Dorsolateral prefrontal cortex (tissue), 120 donors: ENCODE measurements at regions of chr14 and their contacts with region 1.

Region 1: GRCh38 chr14:56659964-56660551 is 80.5 kb downstream of the TMEM260 start:
- DNase-seq: no peak
- H3K4me3 ChIP-seq: no peak overlapping the region
- H3K27ac ChIP-seq: no peak overlapping the region
- H3K27me3 ChIP-seq: no peaks in the 10 kb centered on the region
- CTCF ChIP-seq: peak; percentile 24 to 76 (median 62)

Region 2: DNA sequence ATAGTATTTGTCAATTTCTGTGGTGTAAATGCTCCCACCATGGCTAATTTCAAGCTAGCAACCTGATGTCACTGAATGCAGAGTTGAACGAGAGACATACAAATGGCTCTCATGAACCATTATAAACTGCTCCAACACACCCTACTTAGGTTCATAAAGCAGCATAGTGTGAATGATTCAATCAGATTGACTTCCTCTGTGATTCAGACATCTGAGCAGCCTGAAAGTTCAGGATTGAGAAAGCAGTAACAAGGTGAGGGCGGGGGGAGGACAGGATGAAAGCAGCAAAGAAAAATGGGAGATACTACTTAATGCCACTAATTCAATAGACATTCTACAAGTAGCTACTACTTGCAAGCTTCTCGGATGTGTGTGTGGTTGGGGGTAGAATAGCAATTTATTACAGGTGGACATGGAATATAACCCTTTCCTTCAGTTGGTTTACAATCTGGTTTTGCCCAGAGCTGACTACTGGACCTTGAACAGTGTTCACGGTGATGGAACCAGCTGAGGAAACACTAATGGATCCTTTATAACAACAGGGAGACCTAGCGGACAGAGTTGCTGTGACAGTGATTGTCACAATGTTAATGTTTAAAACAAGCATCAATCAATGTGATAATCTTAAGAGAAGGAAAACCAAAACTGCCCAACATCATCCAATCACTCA is 594.3 kb before region 1 on chr14:
- intact Hi-C with region 1: no loop called
- DNase-seq: no peak
- H3K4me3 ChIP-seq: no peak overlapping the region
- H3K27ac ChIP-seq: no peak overlapping the region
- H3K27me3 ChIP-seq: no peaks in the 10 kb centered on the region
- CTCF ChIP-seq: no peak

Region 3: DNA sequence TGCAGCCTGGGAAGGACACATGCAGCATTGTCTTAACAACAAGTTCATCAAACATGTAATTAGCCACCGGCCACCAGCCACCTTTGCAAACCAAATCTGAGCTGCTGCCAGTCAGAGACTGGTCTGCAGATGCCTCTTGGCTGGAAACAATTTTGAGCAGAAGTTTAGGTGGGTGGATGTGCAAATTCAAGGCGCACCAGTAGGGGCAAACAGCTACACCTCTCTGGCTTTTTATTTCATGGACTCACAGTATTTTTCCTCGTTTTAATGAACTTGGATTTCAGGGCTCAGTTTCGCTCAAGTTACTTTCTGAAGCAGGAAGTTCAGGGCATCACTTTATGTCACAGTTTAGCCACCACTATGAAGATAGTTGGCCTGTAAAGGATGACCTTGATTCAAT is 55.9 kb after region 1 on chr14:
- intact Hi-C with region 1: no loop called
- DNase-seq: no peak
- H3K4me3 ChIP-seq: no peak overlapping the region
- H3K27ac ChIP-seq: no peak overlapping the region
- H3K27me3 ChIP-seq: peaks cover 0 to 29% (median 2%) of the 10 kb centered on the region in 45 donors
- CTCF ChIP-seq: no peak

Region 4: DNA sequence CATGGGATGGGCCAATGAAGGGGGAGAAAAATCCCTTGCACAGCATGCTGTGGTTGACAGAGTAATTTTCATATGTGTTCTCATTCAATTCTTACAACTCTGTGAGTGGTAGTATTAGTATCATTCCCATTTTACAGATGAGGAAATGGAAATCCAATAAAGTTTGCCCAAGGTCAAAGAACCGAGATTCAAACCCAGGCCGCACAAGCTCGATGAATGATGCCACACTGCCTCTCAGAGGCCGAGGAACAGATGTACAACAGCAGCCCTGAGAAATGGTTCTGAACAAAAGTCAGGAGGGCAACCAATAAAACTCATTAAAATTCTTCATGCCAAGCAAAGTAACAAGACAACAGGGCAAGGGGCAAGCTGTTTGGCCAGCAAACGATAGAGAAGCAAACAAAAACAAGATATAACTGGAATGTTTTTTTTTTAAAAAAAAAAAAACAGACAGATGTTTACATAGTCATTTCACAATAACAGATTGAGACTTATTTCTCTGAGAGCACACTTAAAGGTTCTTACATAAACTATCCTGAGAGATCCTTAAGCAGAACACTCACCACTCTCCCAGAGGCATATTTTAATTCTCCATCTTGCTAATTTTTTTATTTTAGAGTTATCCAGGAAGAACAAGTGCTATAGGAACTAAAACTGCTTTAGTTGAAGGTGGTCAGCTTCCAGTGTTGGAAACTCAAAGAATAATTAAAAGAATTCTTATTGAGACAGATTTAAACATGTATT is 522.9 kb after region 1 on chr14:
- intact Hi-C with region 1: loop called in 1 of 2 experiments (anchors 10 kb)
- DNase-seq: no peak
- H3K4me3 ChIP-seq: no peak overlapping the region
- H3K27ac ChIP-seq: no peak overlapping the region
- H3K27me3 ChIP-seq: peaks cover 0 to 6% (median 0%) of the 10 kb centered on the region in 45 donors
- CTCF ChIP-seq: peak in 12 of 56 donors; percentile 4 to 43 (median 14)